ENCODE measurements at regions of chr16 and their contacts with region 1.

Region 1: DNA sequence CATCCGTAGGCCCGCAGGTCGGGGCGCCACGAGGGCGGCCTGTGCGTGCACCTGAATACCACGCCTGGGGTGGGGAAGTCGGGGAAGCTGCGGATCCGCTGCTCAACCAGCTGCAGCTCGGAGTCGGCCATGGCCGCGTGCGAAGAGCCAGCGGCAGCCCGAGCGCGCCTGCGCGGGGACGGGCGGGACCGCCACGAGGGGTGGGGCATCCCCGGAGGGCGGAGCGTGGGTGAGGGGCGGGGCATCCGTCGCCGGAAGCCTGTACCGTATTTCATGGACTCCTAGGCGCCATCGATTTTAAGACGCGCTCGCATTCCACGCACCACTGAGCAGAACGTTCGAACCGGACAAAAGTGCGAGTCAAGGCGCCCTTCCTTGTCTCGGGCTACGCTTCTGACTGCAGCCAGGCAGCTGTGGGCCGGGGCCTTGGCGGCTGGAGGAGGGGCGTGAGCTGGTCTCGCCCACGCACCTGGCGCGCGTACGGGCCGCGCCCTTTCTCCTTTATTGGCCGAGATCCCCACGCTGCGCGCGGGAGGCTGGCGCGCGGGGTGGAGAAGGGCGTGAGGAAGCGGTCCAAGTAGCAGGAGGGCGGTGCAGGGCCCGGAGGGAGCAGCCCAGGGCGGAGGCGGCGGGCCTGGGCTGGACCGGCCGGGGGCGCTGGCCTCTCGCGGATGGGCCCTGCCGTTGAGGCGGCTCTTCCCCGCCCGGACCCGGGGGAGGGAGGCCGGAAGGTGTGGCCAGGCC is at the start of gene APRT:
- DNase-seq: peak; percentile 85 to 90 (median 89)
- H3K4me3 ChIP-seq: peak within 1 kb of the TSS; percentile 48 to 83 (median 58)
- H3K4me3 Mint-ChIP-seq: peak within 1 kb of the TSS; percentile 82 to 91
- H3K27ac ChIP-seq: peak within 1 kb of the TSS; percentile 71 to 93
- H3K27ac Mint-ChIP-seq: peak within 1 kb of the TSS; percentile 73 to 92 (median 91)
- H3K4me1 ChIP-seq: peaks cover 35 to 42% of the 10 kb centered on the region in 2 donors
- H3K4me1 Mint-ChIP-seq: peaks cover 28% of the 10 kb centered on the region
- H3K27me3 ChIP-seq: no peaks in the 10 kb centered on the region
- H3K27me3 Mint-ChIP-seq: peaks cover 0 to 2% (median 0%) of the 10 kb centered on the region in 3 donors
- CTCF ChIP-seq: no peak
- polyA plus RNA-seq, gene APRT: 123 to 307 (median 233) TPM

Region 2: GRCh38 chr16:88619859-88620815 is 191.8 kb before region 1 on chr16:
- intact Hi-C with region 1: no loop called
- DNase-seq: no peak
- H3K4me3 ChIP-seq: no peak overlapping the region
- H3K4me3 Mint-ChIP-seq: no peak overlapping the region
- H3K27ac ChIP-seq: no peak overlapping the region
- H3K27ac Mint-ChIP-seq: peak overlapping the region in 1 of 7 donors; percentile 57
- H3K4me1 ChIP-seq: no peaks in the 10 kb centered on the region
- H3K4me1 Mint-ChIP-seq: no peaks in the 10 kb centered on the region
- H3K27me3 ChIP-seq: no peaks in the 10 kb centered on the region
- H3K27me3 Mint-ChIP-seq: no peaks in the 10 kb centered on the region
- CTCF ChIP-seq: no peak

Region 3: DNA sequence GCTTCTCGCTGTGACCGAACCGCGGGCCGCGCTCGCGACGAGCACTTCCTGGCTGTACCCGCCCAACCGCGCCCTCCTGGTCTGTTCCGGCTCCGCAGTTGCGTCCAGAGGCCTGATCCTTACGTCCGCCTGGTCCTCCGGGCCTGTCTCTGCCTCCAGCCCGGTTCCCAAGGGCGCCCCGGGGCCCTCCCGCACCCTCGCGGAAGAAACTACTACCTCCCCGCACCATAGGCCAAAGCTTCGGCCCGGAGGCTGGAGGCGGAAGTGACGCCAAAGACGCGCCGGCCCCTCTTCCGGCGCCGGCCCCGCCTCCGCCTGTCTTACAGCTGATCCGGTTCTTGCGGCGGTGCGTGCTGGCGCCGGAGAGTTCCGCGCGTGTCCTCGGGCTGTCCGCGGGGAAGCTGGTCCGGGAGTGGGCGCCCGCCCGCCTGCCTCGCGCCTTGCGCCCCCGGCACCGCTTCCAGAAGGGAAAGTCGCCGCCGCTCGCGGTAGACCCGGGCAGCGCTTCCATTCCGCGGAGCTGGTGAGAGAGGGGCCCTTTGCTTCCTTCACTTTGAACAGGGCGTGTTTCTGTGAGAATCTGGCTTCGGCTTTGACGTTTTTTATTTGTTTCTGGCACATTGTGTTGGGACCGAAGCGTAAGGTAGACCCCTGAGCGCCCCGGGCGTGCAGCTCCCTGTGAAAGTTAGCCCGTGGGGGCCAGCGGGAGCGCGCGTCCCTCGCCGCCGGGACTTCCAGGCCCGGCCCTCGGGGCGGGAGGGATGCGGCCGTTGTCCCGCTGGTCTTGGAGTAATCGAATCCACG is 405.6 kb after region 1 on chr16 and contains the start of gene ZNF778:
- intact Hi-C with region 1: loop called in 1 of 2 experiments (anchors 10 kb)
- DNase-seq: peak; percentile 84 to 87 (median 87)
- H3K4me3 ChIP-seq: peak within 1 kb of the TSS; percentile 56 to 93 (median 61)
- H3K4me3 Mint-ChIP-seq: peak within 1 kb of the TSS; percentile 88 to 91
- H3K27ac ChIP-seq: peak within 1 kb of the TSS; percentile 68 to 94
- H3K27ac Mint-ChIP-seq: peak within 1 kb of the TSS; percentile 90 to 97 (median 93)
- H3K4me1 ChIP-seq: peaks cover 16 to 19% of the 10 kb centered on the region in 2 donors
- H3K4me1 Mint-ChIP-seq: peaks cover 17% of the 10 kb centered on the region
- H3K27me3 ChIP-seq: no peaks in the 10 kb centered on the region
- H3K27me3 Mint-ChIP-seq: peaks cover 0 to 1% (median 0%) of the 10 kb centered on the region in 3 donors
- CTCF ChIP-seq: no peak
- polyA plus RNA-seq, gene ZNF778: 0.51 to 9.0 (median 0.60) TPM

Measured in CD14-positive monocyte (primary cell).